CD4-positive, alpha-beta T cell (primary cell): ENCODE measurements at regions of chr2 and their contacts with region 1.

Region 1: GRCh38 chr2:118882709-118883210 is 35.3 kb upstream of the EN1 start:
- DNase-seq: peak; percentile 50 to 83 (median 64)
- ATAC-seq: peak; percentile 90
- H3K4me3 ChIP-seq: peak overlapping the region; percentile 49
- H3K4me3 Mint-ChIP-seq: peak overlapping the region; percentile 86
- H3K27ac ChIP-seq: no peak overlapping the region
- H3K27ac Mint-ChIP-seq: peak overlapping the region; percentile 61
- H3K4me1 ChIP-seq: peaks cover 20% of the 10 kb centered on the region
- H3K4me1 Mint-ChIP-seq: peaks cover 24% of the 10 kb centered on the region
- H3K27me3 ChIP-seq: peaks cover 11 to 19% of the 10 kb centered on the region in 2 experiments
- H3K27me3 Mint-ChIP-seq: peaks cover 15% of the 10 kb centered on the region
- CTCF ChIP-seq: peak; percentile 90

Region 2: GRCh38 chr2:118791483-118791882 is 91.3 kb before region 1 on chr2:
- CTCF ChIA-PET with region 1: no interaction called
- POLR2A ChIA-PET with region 1: no interaction called
- intact Hi-C with region 1: no loop called
- DNase-seq: no peak
- ATAC-seq: no peak
- H3K4me3 ChIP-seq: no peak overlapping the region
- H3K4me3 Mint-ChIP-seq: no peak overlapping the region
- H3K27ac ChIP-seq: no peak overlapping the region
- H3K27ac Mint-ChIP-seq: no peak overlapping the region
- H3K4me1 ChIP-seq: no peaks in the 10 kb centered on the region
- H3K4me1 Mint-ChIP-seq: no peaks in the 10 kb centered on the region
- H3K27me3 ChIP-seq: peaks cover 0 to 2% of the 10 kb centered on the region in 2 experiments
- H3K27me3 Mint-ChIP-seq: peaks cover 55% of the 10 kb centered on the region
- CTCF ChIP-seq: no peak

Region 3: GRCh38 chr2:118855451-118856279 is 27.1 kb before region 1 on chr2:
- CTCF ChIA-PET with region 1: interaction called, 11 read pairs
- POLR2A ChIA-PET with region 1: no interaction called
- intact Hi-C with region 1: no loop called
- DNase-seq: peak; percentile 68 to 88 (median 77)
- ATAC-seq: peak; percentile 94
- H3K4me3 ChIP-seq: peak overlapping the region; percentile 42
- H3K4me3 Mint-ChIP-seq: peak overlapping the region; percentile 77
- H3K27ac ChIP-seq: no peak overlapping the region
- H3K27ac Mint-ChIP-seq: no peak overlapping the region
- H3K4me1 ChIP-seq: peaks cover 46% of the 10 kb centered on the region
- H3K4me1 Mint-ChIP-seq: peaks cover 30% of the 10 kb centered on the region
- H3K27me3 ChIP-seq: peaks cover 96 to 98% of the 10 kb centered on the region in 2 experiments
- H3K27me3 Mint-ChIP-seq: peaks cover 95% of the 10 kb centered on the region
- CTCF ChIP-seq: peak; percentile 95

Region 4: DNA sequence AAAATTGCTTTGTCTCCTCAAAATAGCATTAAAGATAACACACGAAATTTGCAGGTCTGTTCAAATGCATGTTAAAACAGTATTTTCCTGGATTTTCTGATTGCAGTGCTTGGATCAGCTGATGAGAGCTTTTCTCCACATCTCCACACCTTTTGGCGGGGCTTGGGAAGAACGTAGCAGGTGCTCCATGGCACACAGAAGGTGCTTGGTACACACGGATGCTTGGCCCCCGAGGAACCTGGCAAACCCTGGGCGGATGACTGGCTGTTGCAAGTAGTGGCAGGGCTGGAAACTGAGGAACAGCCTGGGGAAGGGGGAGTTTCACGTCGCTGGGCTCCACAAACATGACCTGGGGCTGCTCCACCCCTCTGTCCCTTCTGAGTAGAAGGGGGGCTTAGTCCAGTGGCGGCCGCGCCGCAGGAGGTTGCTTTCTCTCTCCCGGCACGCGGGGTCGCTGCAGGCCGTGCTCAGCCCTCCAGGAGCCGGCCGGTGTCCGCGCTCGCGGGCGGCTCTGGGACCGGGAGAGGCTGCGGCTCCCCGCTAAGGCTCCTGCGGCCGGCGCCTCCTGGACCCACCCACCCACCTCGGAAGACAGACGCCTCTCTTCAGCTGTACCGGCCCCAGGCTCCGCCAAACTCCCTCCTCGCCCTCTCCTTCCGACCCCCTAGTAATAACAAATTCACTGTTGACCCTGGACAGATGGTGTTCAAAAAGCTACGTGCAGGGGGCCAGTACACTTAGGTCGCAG is 128.6 kb after region 1 on chr2:
- CTCF ChIA-PET with region 1: no interaction called
- POLR2A ChIA-PET with region 1: no interaction called
- intact Hi-C with region 1: loop called in 1 of 2 experiments (anchors 2 kb)
- DNase-seq: peak in 2 of 14 experiments; percentile 26 to 31
- ATAC-seq: no peak
- H3K4me3 ChIP-seq: no peak overlapping the region
- H3K4me3 Mint-ChIP-seq: no peak overlapping the region
- H3K27ac ChIP-seq: no peak overlapping the region
- H3K27ac Mint-ChIP-seq: no peak overlapping the region
- H3K4me1 ChIP-seq: no peaks in the 10 kb centered on the region
- H3K4me1 Mint-ChIP-seq: peaks cover 4% of the 10 kb centered on the region
- H3K27me3 ChIP-seq: peaks cover 12 to 13% of the 10 kb centered on the region in 2 experiments
- H3K27me3 Mint-ChIP-seq: peaks cover 34% of the 10 kb centered on the region
- CTCF ChIP-seq: no peak

Region 5: DNA sequence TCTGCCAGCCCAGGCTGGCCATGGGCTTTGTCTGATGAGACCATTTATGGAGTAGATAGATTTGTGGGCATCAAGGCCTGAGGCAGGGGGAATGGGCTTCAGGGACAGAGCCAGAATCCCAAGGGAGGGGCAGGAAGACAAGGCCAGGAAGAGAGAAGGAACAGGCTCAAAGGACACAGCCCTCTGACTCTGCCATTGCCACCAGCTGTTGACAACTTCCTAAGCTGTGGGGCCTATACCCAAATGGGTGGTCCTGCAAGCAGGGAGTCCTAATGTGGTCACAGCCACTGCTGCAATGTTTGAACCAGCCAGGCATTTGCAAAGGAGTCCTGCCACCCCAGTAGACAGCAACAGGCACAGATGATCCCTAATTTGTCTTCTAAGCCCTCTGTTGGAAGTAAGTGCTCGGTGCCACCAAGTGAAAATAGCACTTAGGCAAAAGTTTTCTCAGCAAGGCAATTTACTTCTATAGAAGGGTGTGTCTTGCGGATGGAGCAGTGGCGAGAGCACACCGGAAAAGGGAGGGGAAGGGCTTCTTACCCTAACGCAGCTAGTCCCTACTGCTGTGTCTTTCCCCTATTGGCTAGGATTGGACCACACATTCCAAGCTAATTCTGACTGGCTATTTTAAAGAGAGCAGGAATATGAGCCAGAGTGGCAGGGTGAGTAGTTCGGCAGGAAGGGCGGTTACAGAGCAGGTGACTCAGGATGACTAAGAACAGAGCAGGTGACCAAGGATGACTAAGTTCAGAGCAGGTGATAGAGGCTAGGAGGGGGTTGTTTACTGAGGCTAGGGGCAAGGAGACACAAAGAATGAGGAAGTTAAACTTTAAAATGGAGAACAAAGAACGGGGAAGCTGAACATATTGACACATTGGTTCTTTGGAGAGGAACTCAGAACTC is 228.6 kb after region 1 on chr2:
- CTCF ChIA-PET with region 1: no interaction called
- POLR2A ChIA-PET with region 1: no interaction called
- intact Hi-C with region 1: no loop called
- DNase-seq: no peak
- ATAC-seq: no peak
- H3K4me3 ChIP-seq: no peak overlapping the region
- H3K4me3 Mint-ChIP-seq: no peak overlapping the region
- H3K27ac ChIP-seq: no peak overlapping the region
- H3K27ac Mint-ChIP-seq: no peak overlapping the region
- H3K4me1 ChIP-seq: no peaks in the 10 kb centered on the region
- H3K4me1 Mint-ChIP-seq: no peaks in the 10 kb centered on the region
- H3K27me3 ChIP-seq: peaks cover 4 to 9% of the 10 kb centered on the region in 2 experiments
- H3K27me3 Mint-ChIP-seq: peaks cover 33% of the 10 kb centered on the region
- CTCF ChIP-seq: no peak

Region 6: GRCh38 chr2:119126650-119127049 is 243.9 kb after region 1 on chr2:
- CTCF ChIA-PET with region 1: no interaction called
- POLR2A ChIA-PET with region 1: interaction called, 4 read pairs
- intact Hi-C with region 1: loop called (anchors 1 kb)
- DNase-seq: peak in 13 of 14 experiments; percentile 2 to 54 (median 29)
- ATAC-seq: no peak
- H3K4me3 ChIP-seq: no peak overlapping the region
- H3K4me3 Mint-ChIP-seq: no peak overlapping the region
- H3K27ac ChIP-seq: no peak overlapping the region
- H3K27ac Mint-ChIP-seq: no peak overlapping the region
- H3K4me1 ChIP-seq: no peaks in the 10 kb centered on the region
- H3K4me1 Mint-ChIP-seq: no peaks in the 10 kb centered on the region
- H3K27me3 ChIP-seq: peaks cover 0 to 4% of the 10 kb centered on the region in 2 experiments
- H3K27me3 Mint-ChIP-seq: peaks cover 38% of the 10 kb centered on the region
- CTCF ChIP-seq: peak; percentile 49

Region 7: DNA sequence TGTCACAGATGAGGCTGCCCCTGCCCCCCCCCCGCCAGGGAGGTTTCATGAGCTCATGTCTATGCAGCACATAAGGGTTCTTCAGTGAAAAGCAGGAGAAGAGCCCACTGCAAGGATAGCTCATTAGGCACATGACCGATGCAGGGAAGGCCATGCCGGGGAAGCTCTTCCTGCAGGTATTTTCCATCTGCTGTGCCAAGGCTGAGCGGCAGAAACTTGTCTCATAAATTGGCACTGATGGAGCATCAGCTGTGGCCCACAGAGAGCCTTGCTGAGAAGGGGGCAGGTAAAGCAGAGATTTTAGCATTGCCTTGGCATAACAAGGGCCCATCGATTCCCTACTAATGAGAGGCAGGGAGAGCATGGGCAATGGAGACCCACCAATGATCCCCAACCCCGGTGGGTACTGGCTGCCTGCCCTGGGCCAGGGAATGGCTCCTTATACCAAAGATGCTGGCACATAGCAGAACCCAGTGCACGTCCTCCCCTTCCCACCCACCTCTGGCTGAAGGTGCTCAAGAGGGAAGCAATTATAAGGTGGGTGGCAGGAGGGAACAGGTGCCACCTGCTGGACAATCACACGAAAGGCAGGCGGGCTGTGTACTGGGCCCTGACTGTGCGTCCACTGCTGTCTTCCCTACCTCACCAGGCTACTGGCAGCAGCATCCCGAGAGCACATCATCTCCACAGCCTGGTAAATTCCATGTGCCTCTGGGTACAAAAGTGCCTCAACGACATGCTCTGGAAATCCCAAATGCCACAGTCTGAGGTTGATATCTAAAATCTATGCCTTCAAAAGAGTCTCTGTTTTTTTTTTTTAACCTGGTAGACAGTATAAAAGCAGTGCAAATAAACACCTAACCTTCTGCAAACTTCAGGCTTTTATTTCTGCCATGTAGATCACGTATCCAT is 382.3 kb after region 1 on chr2:
- CTCF ChIA-PET with region 1: no interaction called
- POLR2A ChIA-PET with region 1: no interaction called
- intact Hi-C with region 1: loop called in 1 of 2 experiments (anchors 1 kb)
- DNase-seq: peak in 7 of 14 experiments; percentile 8 to 37 (median 15)
- ATAC-seq: no peak
- H3K4me3 ChIP-seq: no peak overlapping the region
- H3K4me3 Mint-ChIP-seq: no peak overlapping the region
- H3K27ac ChIP-seq: no peak overlapping the region
- H3K27ac Mint-ChIP-seq: no peak overlapping the region
- H3K4me1 ChIP-seq: no peaks in the 10 kb centered on the region
- H3K4me1 Mint-ChIP-seq: no peaks in the 10 kb centered on the region
- H3K27me3 ChIP-seq: peaks cover 0 to 2% of the 10 kb centered on the region in 2 experiments
- H3K27me3 Mint-ChIP-seq: peaks cover 12% of the 10 kb centered on the region
- CTCF ChIP-seq: peak; percentile 57

Region 8: DNA sequence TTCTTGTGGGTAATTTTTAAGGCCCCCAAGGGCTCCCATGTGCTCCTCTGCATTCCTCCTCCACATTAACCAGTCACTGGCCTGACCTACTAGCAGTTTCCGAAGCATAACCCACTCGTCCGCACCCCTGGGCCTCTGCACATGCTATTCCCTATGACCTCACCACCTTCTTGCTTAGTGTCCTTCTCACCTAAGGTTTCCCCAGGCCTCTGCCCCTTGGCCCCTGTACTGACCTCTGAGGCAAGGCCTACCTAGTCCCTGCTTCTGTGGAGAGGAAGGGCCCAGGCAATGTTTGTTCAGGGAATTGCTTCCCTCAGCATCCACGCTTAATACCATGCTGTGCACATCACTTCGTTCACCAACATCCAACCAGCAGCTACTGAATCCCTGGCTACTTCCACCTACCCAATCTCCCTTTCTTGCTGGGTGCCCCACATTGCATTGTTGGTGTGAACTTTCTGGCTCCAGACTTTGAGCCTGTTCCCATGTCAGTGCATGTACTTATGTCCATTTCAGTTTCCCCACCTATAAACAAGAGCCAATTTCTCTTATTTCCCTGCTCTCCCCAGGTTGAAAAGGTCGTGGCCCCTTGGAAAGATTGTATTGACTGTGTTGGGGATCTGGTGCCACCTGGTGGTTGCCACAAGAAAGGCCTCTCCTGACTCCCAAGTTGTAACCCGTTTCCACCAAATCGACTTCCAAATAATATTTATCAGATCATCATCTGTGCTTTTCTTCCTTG is 777.0 kb after region 1 on chr2:
- CTCF ChIA-PET with region 1: no interaction called
- POLR2A ChIA-PET with region 1: no interaction called
- intact Hi-C with region 1: loop called (anchors 5 to 10 kb)
- DNase-seq: peak in 9 of 14 experiments; percentile 12 to 65 (median 26)
- ATAC-seq: peak; percentile 39
- H3K4me3 ChIP-seq: no peak overlapping the region
- H3K4me3 Mint-ChIP-seq: no peak overlapping the region
- H3K27ac ChIP-seq: no peak overlapping the region
- H3K27ac Mint-ChIP-seq: no peak overlapping the region
- H3K4me1 ChIP-seq: no peaks in the 10 kb centered on the region
- H3K4me1 Mint-ChIP-seq: no peaks in the 10 kb centered on the region
- H3K27me3 ChIP-seq: no peaks in the 10 kb centered on the region
- H3K27me3 Mint-ChIP-seq: peaks cover 12% of the 10 kb centered on the region
- CTCF ChIP-seq: peak; percentile 82